ENCODE measurements at regions of chr13 and their contacts with region 1.

Region 1: DNA sequence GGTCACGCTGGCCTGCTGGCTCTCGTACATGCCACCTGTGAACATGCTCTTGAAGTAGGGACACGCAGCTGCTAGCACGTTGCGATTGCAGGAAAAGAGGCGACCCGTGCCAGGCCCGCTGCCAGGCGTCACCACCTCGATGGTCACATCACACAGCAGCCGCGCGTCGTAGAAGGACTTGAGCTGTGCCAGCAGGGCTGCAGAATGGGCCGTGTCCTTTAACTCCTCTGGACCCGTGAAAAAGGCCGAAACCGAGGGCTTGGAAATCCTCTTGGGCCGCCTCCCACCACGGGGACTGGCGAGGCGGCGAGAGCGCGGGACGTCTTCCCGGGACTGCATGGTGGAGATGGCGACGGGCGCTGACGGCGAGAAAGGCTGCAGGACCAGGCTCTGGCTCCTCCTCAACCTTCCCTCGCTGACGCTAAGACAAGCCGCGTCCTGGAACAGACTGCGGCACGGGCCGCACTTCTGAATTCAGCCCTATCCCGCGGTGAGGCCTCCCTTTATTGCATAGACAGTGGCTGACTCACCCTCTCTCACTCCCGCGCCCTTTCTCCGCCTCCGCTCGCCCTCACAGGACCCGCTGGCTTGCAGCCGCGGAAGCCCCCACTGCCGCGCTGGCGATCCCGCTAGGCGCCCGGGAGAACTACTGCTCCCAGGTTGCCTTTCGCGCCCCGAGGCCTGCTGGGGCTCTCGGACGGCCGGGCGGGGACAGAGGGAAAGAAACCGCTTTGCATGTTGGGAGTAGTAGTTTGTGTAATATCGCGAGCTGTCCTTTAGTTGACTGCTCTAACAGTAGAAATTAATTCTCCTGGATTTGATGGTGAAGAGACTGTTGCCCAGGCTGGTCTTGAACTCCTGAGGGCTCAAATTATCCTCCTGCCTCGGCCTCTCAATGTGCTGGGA is at the start of gene KBTBD7:
- DNase-seq: peak; percentile 98
- ATAC-seq: peak; percentile 98
- H3K4me3 ChIP-seq: peak within 1 kb of the TSS; percentile 42
- H3K27ac ChIP-seq: peak within 1 kb of the TSS; percentile 92
- H3K4me1 ChIP-seq: peaks cover 7% of the 10 kb centered on the region
- H3K27me3 ChIP-seq: no peaks in the 10 kb centered on the region
- CTCF ChIP-seq: no peak
- POLR2A ChIP-seq: peak; percentile 67; the same call in 1 of the 2 replicates
- RAD21 ChIP-seq: peak; percentile 29; the same call in 1 of the 2 replicates
- total RNA-seq, gene KBTBD7: 7.9 and 9.4 TPM in 2 replicates

Region 2: DNA sequence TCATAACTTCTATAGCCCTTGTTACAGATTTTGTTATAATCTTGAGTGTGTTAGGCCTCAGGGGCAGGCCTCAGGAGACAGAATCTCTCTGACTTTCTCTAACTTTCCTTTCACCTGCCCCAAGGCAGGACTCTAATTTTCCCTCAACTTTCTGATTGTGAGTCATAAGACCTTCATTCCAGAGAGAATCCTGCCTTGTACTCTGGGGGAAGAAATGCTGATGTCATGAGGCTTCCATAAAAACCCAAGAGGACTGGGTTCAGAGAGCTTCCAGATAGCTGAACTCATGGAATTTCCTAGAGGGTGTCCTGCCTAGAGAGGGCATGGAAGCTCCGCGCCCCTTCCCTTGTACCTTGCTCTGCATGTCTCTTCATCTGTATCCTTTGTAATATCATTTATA is 56.2 kb before region 1 on chr13:
- CTCF ChIA-PET with region 1: no interaction called
- POLR2A ChIA-PET with region 1: no interaction called
- dilution Hi-C with region 1: no loop called
- in situ Hi-C with region 1: no loop called
- intact Hi-C with region 1: loop called (anchors 2 kb)
- DNase-seq: peak; percentile 81
- ATAC-seq: peak; percentile 65
- H3K4me3 ChIP-seq: no peak overlapping the region
- H3K27ac ChIP-seq: peak overlapping the region; percentile 84
- H3K4me1 ChIP-seq: peaks cover 14% of the 10 kb centered on the region
- H3K27me3 ChIP-seq: no peaks in the 10 kb centered on the region
- CTCF ChIP-seq: no peak
- POLR2A ChIP-seq: no peak
- RAD21 ChIP-seq: no peak

Region 3: DNA sequence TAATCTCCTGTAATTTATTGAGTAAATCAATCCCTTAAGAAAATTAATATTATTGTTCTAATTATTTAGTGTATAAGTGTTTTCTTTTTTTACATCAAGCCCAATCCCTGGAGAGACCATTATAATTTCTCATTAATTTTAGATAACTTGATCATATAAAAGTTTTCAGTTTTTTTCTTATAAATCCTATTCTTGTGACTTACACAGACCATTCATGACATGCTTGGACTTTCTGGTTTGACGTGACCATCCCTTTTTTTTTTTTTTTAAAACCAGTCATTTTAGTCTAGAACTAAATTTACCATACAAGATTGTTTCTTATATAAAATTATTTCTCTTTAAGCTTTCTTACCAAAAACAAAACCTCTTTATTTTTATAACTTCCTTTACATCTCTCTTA is 74.6 kb after region 1 on chr13:
- CTCF ChIA-PET with region 1: no interaction called
- POLR2A ChIA-PET with region 1: no interaction called
- dilution Hi-C with region 1: no loop called
- in situ Hi-C with region 1: no loop called
- intact Hi-C with region 1: no loop called
- DNase-seq: peak; percentile 28
- ATAC-seq: no peak
- H3K4me3 ChIP-seq: no peak overlapping the region
- H3K27ac ChIP-seq: no peak overlapping the region
- H3K4me1 ChIP-seq: no peaks in the 10 kb centered on the region
- H3K27me3 ChIP-seq: no peaks in the 10 kb centered on the region
- CTCF ChIP-seq: no peak
- POLR2A ChIP-seq: no peak
- RAD21 ChIP-seq: no peak

Measured in IMR-90 (cell line).